ENCODE measurements at regions of chr17 and their contacts with region 1.

Region 1: DNA sequence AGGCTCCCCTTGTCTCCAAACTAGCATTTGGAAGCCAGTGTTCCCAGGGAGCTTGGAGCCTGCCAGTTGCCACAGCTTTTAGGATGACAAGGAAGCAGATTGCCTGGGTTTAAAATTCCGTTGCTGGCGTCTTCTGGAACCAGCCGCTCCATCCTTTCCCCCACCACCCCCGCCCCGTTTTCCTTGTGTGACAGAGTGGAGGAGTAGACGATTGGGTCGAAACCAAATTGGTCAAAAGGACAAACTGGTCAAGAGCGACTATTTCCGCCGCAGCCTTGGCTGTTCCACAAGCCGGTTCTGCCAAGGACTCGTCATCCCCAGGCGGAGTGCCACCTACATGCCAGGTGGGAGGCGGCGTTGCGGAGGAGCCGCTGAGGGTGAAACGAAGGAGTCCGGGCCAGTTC is 91.1 kb downstream of the RPA1 start:
- DNase-seq: no peak
- H3K4me3 ChIP-seq: no peak overlapping the region
- H3K27ac ChIP-seq: no peak overlapping the region
- H3K4me1 ChIP-seq: no peaks in the 10 kb centered on the region
- H3K27me3 ChIP-seq: no peaks in the 10 kb centered on the region; a peak in 2 of 7 replicates
- CTCF ChIP-seq: no peak
- EP300 ChIP-seq: no peak
- POLR2A ChIP-seq: no peak
- RAD21 ChIP-seq: no peak

Region 2: DNA sequence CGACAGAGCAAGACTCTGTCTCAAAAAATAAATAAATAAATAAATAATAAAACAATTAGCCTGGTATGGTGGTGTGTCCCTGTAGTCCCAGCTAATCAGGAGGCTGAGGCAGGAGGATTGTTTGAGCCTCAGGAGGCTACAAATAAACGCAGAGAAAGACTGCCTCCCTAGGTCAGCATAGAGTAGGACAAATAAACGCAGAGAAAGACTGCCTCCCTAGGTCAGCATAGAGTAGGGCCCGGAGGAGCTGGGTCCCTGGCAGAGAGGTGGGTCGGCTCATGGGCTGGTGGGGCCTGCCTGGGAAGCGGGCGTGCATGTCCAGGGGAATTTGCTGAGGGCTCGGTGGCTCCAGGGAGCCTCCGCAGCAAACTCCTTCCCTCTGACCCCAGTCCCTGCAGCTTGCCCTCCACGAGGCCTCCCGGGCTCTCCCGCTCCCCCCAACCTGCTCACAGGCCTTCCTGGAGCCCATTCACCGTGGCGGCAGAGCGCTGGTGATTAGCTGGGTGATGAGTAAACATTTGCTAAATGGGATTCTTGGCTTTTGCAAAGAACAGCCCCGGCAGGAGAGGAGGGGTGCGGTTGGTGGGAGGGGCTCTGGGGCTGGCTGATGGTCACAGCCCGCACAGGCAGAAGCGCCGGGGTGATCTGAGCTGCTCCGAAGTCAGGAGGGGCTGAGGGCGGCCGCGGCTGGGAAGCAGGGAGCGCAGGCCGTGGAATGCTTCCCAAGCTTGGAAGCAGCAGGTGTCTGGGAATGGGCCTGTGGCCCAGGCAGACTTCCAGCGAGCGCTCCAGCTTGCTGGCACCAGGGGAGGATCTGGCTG is 11.0 kb after region 1 on chr17:
- CTCF ChIA-PET with region 1: interaction called, 14 read pairs
- POLR2A ChIA-PET with region 1: no interaction called
- DNase-seq: peak in 1 of 2 experiments; percentile 73
- H3K4me3 ChIP-seq: peak overlapping the region in 1 of 4 experiments; percentile 47; a peak in 2 of 8 replicates
- H3K27ac ChIP-seq: no peak overlapping the region
- H3K4me1 ChIP-seq: peaks cover 0 to 3% (median 1%) of the 10 kb centered on the region in 4 experiments; a peak in 3 of 7 replicates
- H3K27me3 ChIP-seq: peaks cover 0 to 6% (median 3%) of the 10 kb centered on the region in 4 experiments; a peak in 4 of 7 replicates
- CTCF ChIP-seq: peak in 2 of 3 experiments; percentile 40 to 71; a peak in 3 of 4 replicates
- EP300 ChIP-seq: no peak
- POLR2A ChIP-seq: no peak
- RAD21 ChIP-seq: peak in 1 of 2 experiments; percentile 39; a peak in 2 of 4 replicates